Sciatic nerve (tissue), 2 donors: ENCODE measurements at regions of chr6 and their contacts with region 1.

Region 1: DNA sequence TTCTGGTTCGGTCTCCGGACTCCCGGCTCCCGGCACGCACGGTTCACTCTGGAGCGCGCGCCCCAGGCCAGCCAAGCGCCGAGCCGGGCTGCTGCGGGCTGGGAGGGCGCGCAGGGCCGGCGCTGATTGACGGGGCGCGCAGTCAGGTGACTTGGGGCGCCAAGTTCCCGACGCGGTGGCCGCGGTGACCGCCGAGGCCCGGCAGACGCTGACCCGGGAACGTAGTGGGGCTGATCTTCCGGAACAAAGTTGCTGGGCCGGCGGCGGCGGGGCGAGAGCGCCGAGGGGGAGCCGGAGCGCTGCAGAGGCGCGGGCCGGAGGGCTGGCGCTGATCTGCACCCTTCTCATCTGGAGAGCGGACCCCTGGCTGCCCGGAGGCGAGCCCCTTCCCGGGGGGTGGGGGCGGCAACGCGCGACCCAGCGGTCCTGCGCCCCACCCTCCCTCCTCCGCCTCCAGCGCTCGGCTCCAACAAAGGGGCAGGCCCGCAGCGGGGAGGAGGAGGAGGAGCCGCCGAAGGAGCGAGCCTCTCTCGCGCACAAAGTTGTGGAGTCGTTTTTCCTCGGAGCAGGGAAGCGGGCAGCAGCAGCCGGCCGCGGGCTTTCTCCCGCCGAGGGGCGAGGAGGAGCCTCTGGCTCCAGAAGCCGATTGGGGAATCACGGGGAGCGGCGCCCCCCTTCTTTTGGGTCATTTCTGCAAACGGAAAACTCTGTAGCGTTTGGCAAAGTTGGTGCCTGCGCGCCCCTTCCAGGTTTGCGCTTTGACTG is at the start of gene UTRN:
- DNase-seq: peak; percentile 91
- ATAC-seq: peak; percentile 87
- total RNA-seq, gene UTRN: 594 TPM

Region 2: DNA sequence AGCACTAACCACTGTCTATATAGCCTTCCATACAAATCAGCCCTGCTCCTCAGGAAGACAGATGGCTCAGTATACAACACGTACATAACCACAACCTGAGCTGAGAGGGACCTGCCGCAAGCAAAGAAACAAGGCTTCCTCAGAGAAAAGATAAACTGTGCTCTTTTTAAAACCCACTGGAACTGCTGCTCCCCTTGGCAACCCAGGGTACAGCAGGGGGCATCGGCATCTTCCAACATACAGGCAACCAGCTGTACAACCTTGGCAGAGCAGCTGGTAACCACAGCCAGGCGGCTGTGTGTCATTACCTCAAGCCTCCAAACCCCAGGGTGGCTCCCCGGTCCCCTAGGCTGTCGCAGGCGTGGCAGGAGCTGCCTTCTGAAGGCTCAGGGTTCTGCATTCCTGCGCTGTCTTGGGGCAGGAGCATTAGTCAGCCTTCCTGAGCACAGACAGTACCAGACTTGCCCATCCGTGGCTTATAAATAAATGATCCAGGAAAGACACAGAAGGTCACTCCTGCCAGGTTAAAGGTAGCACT is 1733.6 kb before region 1 on chr6:
- intact Hi-C with region 1: no loop called
- DNase-seq: no peak
- ATAC-seq: peak; percentile 28

Region 3: DNA sequence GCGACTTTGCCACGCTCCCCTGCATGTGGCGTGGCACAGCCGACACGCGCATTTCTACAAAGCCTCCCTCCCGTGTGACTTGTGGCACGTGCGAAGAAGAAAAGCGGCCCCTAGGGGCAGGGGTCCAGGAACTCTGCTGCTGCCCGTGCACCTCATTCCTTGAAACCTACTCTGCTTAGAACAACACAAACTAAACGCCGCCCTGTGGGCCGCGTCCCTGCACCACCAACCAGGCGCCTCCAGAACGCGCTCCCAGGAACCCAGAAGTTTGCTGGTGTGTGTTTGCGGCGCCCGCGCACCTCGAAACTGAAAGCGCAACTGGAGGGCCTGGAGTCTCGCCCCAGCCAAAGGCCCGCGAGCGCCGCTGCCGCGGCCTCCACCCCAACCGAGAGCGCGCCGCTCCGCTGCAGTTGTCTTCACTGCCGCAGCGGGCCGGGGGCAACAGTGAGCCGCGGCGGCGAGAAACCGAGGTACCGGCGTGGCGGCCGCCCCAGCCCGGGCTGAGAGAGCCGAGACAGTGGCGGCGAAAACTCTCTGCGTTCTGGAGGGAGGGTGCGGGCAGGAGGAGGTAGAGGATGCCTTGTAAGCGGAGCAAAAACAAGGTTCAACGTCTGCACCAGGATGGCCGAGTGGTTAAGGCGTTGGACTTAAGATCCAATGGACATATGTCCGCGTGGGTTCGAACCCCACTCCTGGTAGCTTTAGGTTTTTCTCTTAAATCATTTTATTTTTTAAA is 68.9 kb before region 1 on chr6:
- intact Hi-C with region 1: loop called (anchors 5 kb)
- DNase-seq: peak; percentile 97
- ATAC-seq: peak; percentile 96

Region 4: DNA sequence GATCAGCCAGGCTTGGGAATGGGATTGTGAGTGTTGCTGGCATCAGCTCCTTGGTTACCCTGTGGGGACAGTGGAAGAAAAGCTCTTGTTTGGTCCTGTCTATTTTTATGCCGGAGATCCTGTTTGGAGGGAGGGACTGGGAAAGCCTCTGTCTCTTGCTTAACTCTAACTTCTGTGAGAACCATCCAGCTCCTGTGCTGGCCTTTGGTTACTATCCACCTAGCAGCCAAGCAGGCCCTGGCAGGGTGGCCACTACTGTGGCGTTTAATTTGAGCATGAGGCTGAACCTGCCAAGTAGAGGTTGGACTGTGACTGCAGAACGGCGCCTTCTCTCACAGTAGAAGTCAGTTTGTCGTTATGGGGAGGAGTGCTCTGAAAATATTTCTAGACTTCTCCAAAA is 193.5 kb after region 1 on chr6:
- intact Hi-C with region 1: loop called (anchors 10 kb)
- DNase-seq: no peak
- ATAC-seq: peak; percentile 60